B cell (primary cell): ENCODE measurements at regions of chr10 and their contacts with region 1.

Region 1: DNA sequence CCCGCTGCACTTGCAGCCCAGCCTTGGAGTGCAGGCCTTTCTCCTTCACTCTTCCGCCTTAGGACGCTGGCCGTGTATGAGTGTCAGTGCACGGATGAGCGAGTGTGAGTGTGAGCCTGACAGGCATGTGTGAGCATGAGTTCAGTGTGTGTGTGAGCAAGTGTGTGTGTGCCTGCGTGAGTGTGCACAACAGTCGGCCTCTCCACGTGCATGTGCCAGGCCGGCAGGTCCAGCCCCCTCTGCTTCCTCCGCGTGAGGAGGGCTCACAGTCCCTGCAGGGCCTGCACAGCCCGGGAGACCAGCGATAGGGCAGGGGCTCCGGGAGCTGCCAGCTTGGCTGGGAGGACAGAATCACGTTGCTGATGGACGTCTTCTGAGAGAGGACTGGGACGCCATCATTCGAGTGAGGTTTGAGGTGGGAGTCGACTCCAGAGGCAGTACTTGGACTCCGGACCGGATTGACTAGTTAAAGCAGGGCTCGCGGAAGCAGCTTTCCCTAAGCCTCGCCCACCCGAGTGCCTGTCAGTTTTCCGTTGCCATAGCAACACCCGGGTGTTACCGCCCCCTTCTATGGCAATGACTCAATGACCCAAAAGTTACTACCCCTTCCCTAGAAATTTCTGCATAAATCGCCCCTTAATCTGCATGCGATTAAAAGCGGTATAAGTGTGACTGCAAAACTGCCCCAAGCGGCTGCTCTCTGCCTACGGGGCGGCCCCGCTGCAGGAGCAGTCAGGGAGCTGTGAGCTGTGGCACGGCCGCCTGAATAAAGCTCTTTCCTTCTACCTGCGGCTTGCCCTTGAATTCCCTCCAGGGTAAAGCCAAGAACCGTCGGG is 19.6 kb upstream of the CFAP46 start:
- DNase-seq: peak; percentile 68
- ATAC-seq: peak; percentile 70
- H3K4me3 ChIP-seq: peak overlapping the region; percentile 19 to 91 (median 63)
- H3K4me3 Mint-ChIP-seq: peak overlapping the region; percentile 95
- H3K27ac ChIP-seq: peak overlapping the region in 1 of 2 donors; percentile 50
- H3K27ac Mint-ChIP-seq: no peak overlapping the region
- H3K4me1 ChIP-seq: peaks cover 5 to 9% of the 10 kb centered on the region in 2 donors
- H3K4me1 Mint-ChIP-seq: peaks cover 22% of the 10 kb centered on the region
- H3K27me3 ChIP-seq: no peaks in the 10 kb centered on the region
- H3K27me3 Mint-ChIP-seq: peaks cover 24% of the 10 kb centered on the region
- CTCF ChIP-seq: no peak

Region 2: GRCh38 chr10:132915469-132915810 is 46.6 kb before region 1 on chr10:
- CTCF ChIA-PET with region 1: no interaction called
- POLR2A ChIA-PET with region 1: no interaction called
- intact Hi-C with region 1: loop called (anchors 1 kb)
- DNase-seq: peak; percentile 81
- ATAC-seq: peak; percentile 94
- H3K4me3 ChIP-seq: no peak overlapping the region
- H3K4me3 Mint-ChIP-seq: peak overlapping the region; percentile 77
- H3K27ac ChIP-seq: no peak overlapping the region
- H3K27ac Mint-ChIP-seq: peak overlapping the region; percentile 56
- H3K4me1 ChIP-seq: peaks cover 26 to 27% of the 10 kb centered on the region in 2 donors
- H3K4me1 Mint-ChIP-seq: peaks cover 19% of the 10 kb centered on the region
- H3K27me3 ChIP-seq: peaks cover 0 to 31% (median 7%) of the 10 kb centered on the region in 4 experiments
- H3K27me3 Mint-ChIP-seq: peaks cover 17% of the 10 kb centered on the region
- CTCF ChIP-seq: no peak

Region 3: DNA sequence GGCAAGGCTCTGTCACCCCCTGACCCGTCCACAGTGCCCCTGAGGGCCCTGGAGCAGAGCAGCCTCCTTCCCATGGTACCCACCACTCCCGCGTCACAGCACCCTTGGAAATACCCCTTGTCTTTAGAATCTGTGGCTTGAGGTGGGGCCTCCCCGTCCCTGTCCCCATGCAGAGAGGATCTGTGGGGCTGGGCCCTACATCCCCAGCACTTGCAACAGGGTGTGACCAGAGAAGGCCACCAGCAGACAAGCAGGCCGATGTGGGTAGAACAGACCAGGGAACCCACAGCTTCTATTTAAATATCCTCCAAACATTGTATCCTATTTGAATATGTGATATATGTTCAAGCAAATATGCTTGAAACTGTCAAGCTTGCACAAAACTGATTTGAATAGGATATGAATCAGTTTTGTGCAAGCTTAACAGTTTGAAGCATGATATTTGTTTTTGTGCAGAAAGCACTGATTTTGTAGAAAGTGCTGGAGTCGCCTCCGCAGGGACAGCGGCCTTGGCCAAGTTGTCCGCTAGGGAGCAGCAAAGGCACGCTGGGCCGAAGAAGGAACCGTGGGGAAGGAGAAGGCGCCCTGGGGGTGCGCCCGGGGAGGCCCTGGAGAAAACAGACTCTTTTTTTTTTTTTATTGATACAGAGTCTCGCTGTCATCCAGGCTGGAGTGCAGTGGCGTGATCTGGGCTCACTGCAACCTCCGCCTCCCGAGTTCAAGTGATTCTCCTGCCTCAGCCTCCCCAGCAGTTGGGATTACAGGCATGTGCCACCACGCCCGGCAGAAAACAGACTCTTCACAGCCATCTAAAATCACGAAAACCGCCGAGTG is 21.8 kb before region 1 on chr10:
- CTCF ChIA-PET with region 1: interaction called, 3 read pairs
- POLR2A ChIA-PET with region 1: no interaction called
- intact Hi-C with region 1: loop called (anchors 1 kb)
- DNase-seq: peak; percentile 65
- ATAC-seq: peak; percentile 68
- H3K4me3 ChIP-seq: no peak overlapping the region
- H3K4me3 Mint-ChIP-seq: peak overlapping the region; percentile 76
- H3K27ac ChIP-seq: no peak overlapping the region
- H3K27ac Mint-ChIP-seq: no peak overlapping the region
- H3K4me1 ChIP-seq: peaks cover 19 to 25% of the 10 kb centered on the region in 2 donors
- H3K4me1 Mint-ChIP-seq: peaks cover 27% of the 10 kb centered on the region
- H3K27me3 ChIP-seq: peaks cover 0 to 60% (median 18%) of the 10 kb centered on the region in 4 experiments
- H3K27me3 Mint-ChIP-seq: peaks cover 59% of the 10 kb centered on the region
- CTCF ChIP-seq: peak; percentile 72